PC-9 (cell line): ENCODE measurements at regions of chr18 and their contacts with region 1.

Region 1: GRCh38 chr18:3114026-3114425 is 101.1 kb upstream of the LPIN2 start:
- DNase-seq: peak in 1 of 2 experiments; percentile 81
- H3K4me3 ChIP-seq: no peak overlapping the region
- H3K27ac ChIP-seq: peak overlapping the region; percentile 48
- H3K4me1 ChIP-seq: peaks cover 55% of the 10 kb centered on the region
- H3K27me3 ChIP-seq: no peaks in the 10 kb centered on the region
- CTCF ChIP-seq: no peak

Region 2: DNA sequence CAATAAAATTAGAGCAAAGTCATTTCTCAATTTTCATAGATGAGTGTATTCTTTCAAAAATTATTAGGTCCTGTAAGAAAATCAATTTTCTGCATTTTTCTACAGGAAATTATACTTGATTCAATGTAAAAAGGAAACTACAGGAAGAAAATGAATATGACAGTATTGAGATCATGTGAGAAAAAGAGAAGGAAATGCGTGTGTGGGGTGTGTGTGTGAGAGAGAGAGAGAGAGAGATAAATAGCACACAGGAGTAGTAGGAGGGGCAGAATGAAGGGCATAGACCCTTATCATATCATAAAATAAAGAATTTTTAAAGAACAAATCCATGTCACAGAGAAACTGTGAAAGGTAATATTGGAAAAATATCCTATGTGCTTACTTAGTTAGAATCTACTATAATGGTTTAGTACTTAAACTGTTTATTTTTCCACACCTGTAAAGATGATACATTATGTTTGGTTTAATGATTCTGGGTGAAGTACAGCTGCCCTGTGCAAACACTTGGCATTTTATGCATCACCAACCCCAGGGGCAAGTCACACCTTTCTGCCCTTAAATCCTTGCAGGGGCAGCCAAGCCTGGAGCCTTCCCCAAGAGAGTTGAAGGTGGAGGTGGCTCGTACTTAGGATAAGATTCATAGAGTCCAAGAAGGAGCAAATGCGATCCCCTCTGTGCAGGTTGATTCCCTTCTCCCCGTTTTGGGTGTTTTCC is 612.4 kb after region 1 on chr18:
- CTCF ChIA-PET with region 1: no interaction called
- POLR2A ChIA-PET with region 1: no interaction called
- intact Hi-C with region 1: no loop called
- DNase-seq: no peak
- H3K4me3 ChIP-seq: no peak overlapping the region
- H3K27ac ChIP-seq: no peak overlapping the region
- H3K4me1 ChIP-seq: peaks cover 10% of the 10 kb centered on the region
- H3K27me3 ChIP-seq: no peaks in the 10 kb centered on the region
- CTCF ChIP-seq: no peak

Region 3: DNA sequence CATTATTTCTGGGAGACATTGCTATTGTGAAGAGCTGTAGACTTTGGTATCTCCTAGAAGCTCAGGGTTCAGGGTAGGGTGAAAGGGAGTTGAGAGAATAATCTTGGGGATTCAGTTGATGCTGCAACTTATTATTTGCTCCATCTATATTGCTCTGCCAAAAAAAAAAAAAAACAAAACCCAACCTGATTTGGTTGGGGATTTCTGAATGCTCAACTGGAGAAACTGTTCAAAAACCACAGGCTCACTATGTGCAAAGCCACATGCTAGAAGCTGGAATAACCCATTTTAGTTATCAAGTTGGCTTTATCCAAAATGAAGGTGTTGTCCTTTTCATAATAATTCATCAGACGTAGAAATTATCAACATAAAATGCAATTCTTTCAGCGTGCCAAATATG is 645.1 kb after region 1 on chr18:
- CTCF ChIA-PET with region 1: no interaction called
- POLR2A ChIA-PET with region 1: interaction called, 26 read pairs
- intact Hi-C with region 1: no loop called
- DNase-seq: no peak
- H3K4me3 ChIP-seq: no peak overlapping the region
- H3K27ac ChIP-seq: no peak overlapping the region
- H3K4me1 ChIP-seq: no peaks in the 10 kb centered on the region
- H3K27me3 ChIP-seq: no peaks in the 10 kb centered on the region
- CTCF ChIP-seq: no peak